Activated naive CD8-positive, alpha-beta T cell treated with anti-CD3 and anti-CD28 coated beads, Interleukin-2, amount 10 ng/mL, durations not matched to agents 7 days and 5 days (primary cell): ENCODE measurements at regions of chr17 and their contacts with region 1.

Region 1: DNA sequence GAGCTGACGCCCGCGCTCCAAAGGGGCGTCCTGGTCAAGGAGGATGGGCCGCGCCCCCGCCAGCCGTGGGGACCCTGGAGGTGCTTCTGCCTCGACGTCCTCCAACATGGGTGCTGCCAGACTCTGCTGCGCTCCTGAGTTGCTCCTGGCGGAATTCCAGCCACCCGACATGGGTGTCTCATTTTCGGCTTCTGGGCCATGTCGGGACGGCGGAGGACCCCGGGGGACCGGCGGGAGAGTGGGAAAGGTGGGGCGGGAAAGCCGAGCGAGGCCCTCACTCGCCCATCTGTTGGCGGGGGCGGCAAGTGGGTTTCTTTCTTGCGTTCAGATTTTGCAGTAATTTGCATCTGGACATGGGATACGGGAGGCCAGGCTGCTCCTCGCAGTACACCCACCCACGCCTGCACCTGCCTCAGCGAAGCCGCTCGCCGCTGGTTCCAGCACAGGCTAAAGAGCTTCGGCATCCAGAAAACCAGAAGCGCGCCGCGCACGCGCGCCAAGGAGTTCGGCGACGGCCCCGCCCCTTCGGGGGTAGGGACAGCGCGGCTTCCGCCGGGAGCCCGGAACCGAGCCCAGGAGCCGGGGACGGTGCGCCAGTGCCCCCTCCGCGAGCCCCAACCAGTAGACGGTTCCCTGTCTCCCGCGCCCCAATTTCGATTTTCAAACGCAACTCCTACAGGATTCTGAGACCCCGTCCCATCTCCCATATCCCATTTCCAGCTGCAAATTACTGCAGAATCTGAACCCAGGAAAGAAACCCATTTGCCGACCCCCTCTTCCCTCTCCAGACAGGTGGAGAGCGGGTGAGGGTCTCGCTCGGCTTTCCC is at the start of gene ARMC7:
- DNase-seq: peak; percentile 94
- ATAC-seq: peak; percentile 79
- H3K4me3 Mint-ChIP-seq: peak within 1 kb of the TSS; percentile 95
- H3K27ac Mint-ChIP-seq: peak within 1 kb of the TSS; percentile 86
- H3K4me1 Mint-ChIP-seq: peaks cover 29% of the 10 kb centered on the region
- H3K27me3 Mint-ChIP-seq: no peaks in the 10 kb centered on the region
- total RNA-seq, gene ARMC7: 16.2 to 17.6 TPM

Region 2: GRCh38 chr17:75039238-75039637 is 70.4 kb before region 1 on chr17:
- POLR2A ChIA-PET with region 1: no interaction called
- DNase-seq: no peak
- ATAC-seq: no peak
- H3K4me3 Mint-ChIP-seq: no peak overlapping the region
- H3K27ac Mint-ChIP-seq: no peak overlapping the region
- H3K4me1 Mint-ChIP-seq: peaks cover 18% of the 10 kb centered on the region
- H3K27me3 Mint-ChIP-seq: no peaks in the 10 kb centered on the region

Region 3: DNA sequence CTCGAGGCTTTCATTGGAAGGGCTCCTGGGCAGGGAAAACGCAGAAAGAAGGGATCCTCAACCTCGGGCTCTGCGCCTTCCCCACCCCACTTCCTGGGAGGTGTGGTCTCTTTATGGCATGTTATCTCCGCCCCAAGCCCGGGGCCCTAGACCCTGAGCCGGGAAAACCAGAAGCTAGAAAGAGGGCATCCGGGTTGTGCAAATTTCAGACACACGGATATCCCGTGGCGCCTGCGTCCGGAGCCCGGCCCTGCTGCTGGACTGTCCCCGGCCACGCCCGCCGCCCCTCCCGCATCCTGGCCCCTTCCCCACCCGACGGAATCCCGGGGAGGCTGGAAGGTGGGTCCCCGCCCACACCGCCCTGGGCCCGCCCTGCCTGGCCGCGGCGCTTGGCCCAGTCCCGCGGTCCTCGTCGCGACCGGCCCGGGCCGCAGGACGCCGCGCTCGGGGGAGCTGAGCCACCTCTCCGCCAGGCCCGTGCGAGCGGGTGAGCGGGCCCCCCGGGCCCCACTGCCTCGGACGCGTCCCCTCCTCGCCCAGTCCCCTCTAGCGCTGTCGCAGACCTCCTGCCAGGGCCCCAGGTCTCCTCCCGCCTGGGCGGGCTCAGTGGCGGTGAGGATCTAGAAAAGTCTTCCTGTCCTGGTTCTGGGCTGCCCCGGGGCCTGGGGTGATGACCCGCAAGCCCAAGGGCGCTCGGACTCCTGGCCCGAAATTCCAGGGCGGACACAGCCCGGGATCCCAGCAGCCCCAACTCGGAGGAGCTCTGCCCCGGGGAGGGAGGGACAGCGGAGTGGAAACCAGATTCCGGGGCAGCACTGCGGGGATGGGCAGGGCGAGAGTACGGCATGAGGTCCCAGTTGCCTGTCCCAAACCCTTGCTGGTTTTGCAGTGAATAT is 21.8 kb before region 1 on chr17 and contains the start of gene SLC16A5:
- POLR2A ChIA-PET with region 1: interaction called, 13 read pairs
- DNase-seq: peak; percentile 70
- ATAC-seq: peak; percentile 68
- H3K4me3 Mint-ChIP-seq: peak within 1 kb of the TSS; percentile 82
- H3K27ac Mint-ChIP-seq: peak within 1 kb of the TSS; percentile 83
- H3K4me1 Mint-ChIP-seq: peaks cover 32% of the 10 kb centered on the region
- H3K27me3 Mint-ChIP-seq: no peaks in the 10 kb centered on the region
- total RNA-seq, gene SLC16A5: 9.1 to 11.0 TPM

Region 4: DNA sequence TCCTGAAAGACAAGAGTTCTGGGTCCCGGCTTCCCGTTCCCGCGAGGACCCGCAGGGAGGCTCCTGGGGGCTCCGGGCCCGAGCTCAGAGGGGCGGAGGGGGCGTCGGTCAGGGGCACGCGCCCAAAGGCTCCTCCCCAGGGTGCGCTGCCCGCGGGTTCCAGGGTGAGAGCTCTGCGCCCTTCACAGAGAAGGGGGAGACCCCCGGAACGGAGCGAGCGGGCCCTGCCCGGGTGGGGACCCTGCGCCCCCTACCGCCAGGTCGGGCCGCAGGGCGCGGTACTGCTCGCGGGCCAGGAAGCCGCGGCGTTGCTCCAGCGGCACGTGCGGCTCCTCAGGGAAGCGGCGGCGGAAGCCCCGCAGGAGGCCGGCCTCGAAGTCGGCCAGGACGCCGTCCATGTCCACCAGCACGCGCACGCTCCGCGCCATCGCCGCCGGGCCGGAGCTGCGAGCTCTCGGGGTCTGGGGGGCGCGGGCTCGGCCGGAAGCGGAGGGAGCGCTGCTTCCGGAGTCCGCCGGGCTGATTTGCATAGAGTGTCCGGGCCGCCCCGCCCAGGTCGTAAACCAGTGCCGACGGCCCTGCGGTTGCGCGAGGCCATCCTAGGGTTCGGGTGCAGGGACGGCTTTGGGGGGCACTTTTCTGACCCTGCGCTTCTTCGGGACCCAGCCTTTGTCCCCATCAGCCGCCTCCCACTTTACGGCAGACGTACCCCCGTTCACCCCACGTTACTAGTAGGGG is 21.8 kb after region 1 on chr17 and contains the start of gene NT5C:
- POLR2A ChIA-PET with region 1: interaction called, 45 read pairs
- DNase-seq: peak; percentile 86
- ATAC-seq: peak; percentile 80
- H3K4me3 Mint-ChIP-seq: peak within 1 kb of the TSS; percentile 89
- H3K27ac Mint-ChIP-seq: peak within 1 kb of the TSS; percentile 85
- H3K4me1 Mint-ChIP-seq: peaks cover 10% of the 10 kb centered on the region
- H3K27me3 Mint-ChIP-seq: no peaks in the 10 kb centered on the region
- total RNA-seq, gene NT5C: 69.9 to 70.8 TPM

Region 5: DNA sequence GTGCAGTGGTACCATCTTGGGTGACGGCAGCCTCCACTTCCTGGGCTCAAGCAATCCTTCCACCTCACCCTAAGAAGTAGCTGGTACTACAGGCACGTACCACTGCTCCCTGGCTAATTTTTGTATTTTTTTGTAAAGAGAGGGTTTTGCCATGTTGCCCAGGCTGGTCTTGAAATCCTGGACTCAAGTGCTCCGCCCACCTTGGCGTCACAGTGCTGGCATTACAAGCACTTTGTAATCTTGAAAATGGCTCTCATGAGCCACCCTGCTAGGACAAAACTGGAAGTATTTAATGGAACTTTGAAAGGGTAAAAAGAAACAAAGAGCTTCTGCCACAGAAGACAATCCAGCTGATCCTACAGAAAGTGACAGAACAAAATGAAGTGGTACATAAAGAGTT is 63.9 kb after region 1 on chr17:
- POLR2A ChIA-PET with region 1: interaction called, 24 read pairs
- DNase-seq: no peak
- ATAC-seq: no peak
- H3K4me3 Mint-ChIP-seq: no peak overlapping the region
- H3K27ac Mint-ChIP-seq: peak overlapping the region; percentile 48
- H3K4me1 Mint-ChIP-seq: peaks cover 19% of the 10 kb centered on the region
- H3K27me3 Mint-ChIP-seq: no peaks in the 10 kb centered on the region

Region 6: DNA sequence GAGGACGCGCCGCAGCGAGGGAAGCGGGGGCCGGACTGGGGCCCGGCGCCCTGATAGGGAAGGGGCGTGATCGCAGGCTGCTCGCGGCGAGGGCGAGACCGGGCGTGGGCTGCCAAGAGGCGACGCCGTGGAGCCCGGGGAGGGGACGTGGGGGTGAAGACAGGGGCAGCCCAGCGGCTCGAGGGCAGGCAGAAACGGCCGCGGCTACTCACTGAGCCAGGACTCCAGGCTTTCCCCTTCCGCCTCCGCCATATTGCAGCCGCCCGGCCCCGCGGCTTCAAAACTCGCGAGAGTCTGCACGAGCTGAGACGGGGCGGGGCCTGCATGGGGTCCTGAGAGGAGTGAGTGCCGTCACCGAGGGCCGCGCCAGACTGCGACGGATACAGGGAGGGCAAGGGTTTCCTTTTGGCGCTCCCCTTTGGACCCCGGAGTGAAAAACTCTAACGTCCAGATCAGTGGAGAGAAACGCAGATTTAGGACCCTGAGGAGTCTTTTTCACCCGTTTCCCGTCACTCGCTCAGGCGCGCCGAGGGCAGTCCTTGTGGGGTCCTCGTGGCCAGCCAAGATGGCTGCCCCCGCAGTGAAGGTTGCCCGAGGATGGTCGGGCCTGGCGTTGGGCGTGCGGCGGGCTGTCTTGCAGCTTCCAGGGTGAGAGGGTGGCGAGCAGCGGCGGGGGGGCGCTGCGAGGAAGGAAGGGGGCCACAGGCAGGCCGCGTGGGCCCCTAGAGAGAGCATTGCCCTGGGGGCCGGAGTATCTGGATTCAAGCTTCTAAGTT is 151.9 kb after region 1 on chr17 and contains the starts of genes GGA3 and MRPS7:
- POLR2A ChIA-PET with region 1: interaction called, 10 read pairs
- DNase-seq: peak; percentile 98
- ATAC-seq: peak; percentile 90
- H3K4me3 Mint-ChIP-seq: peak within 1 kb of the TSS; percentile 99
- H3K27ac Mint-ChIP-seq: peak within 1 kb of the TSS; percentile 99
- H3K4me1 Mint-ChIP-seq: peaks cover 30% of the 10 kb centered on the region
- H3K27me3 Mint-ChIP-seq: no peaks in the 10 kb centered on the region
- total RNA-seq, gene GGA3: 92.9 to 95.2 TPM
- total RNA-seq, gene MRPS7: 34.0 to 36.1 TPM